ENCODE measurements at regions of chr18 and their contacts with region 1.

Region 1: DNA sequence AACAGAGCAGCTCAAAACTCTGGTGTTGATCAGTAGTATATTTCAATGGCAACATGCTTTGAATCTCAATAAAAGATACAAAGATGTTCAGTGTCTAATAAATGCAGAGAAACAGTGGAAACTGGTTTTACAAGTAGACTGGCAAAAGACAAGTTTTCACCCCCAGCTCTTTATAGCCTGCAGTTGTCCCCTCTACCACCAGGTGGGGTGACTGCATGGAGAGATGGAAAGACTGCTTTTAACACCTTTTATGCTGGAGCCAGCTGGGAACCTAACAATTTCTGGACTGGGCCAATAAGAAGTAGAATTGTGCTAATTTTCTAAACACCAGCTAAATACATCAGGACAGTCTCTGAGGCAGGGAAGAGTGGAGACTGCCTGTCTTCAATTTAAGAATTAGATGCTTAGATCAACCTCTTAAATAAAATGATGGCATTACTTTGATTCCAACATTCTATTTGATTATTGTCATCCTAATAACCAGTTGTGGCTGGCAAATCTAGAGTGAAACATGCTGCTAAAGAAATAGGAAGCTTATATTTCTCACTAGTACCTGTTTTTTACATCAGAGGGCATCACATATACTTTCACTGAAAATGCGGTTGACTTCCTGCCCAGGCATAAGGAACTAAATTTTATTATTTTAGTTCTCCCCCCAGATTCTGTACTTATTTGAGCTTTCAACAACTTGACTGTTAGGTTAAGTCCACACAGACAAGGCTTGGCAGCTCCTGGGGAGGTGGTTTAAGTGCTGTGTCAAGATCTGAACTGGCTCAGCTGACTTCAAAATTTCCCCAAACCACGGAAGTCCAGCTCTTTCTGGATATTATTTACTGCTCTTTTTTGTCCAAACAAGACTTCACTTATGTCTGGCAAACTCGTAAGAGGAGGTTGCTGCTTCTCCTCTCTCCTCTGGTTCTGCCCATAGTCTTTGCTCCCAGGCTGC is 140.5 kb downstream of the TPGS2 start:
- DNase-seq: peak; percentile 28
- H3K4me3 Mint-ChIP-seq: no peak overlapping the region
- H3K27ac Mint-ChIP-seq: no peak overlapping the region
- H3K4me1 Mint-ChIP-seq: no peaks in the 10 kb centered on the region
- H3K27me3 Mint-ChIP-seq: peaks cover 16% of the 10 kb centered on the region

Region 2: DNA sequence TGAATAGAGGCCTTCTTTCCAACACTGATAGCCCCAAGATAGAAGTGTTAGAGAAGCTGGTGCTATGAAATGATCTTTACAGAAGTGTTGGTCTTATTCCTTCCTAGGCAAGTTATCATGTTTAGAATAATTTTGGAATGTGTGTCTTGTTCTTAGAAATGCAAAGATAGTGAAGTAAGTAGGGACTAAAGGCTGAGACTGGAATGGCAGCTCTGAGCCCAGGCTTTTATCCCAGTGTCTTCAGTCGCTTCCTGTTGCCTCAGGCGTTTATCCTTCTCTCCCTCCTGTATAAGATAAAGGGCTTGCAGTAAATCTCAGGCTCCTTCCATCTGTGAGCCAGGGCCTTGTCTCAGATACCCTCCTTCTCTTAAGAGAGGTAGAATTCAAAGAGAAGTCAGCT is 77.6 kb before region 1 on chr18:
- intact Hi-C with region 1: no loop called
- DNase-seq: no peak
- H3K4me3 Mint-ChIP-seq: no peak overlapping the region
- H3K27ac Mint-ChIP-seq: no peak overlapping the region
- H3K4me1 Mint-ChIP-seq: no peaks in the 10 kb centered on the region
- H3K27me3 Mint-ChIP-seq: no peaks in the 10 kb centered on the region

Region 3: DNA sequence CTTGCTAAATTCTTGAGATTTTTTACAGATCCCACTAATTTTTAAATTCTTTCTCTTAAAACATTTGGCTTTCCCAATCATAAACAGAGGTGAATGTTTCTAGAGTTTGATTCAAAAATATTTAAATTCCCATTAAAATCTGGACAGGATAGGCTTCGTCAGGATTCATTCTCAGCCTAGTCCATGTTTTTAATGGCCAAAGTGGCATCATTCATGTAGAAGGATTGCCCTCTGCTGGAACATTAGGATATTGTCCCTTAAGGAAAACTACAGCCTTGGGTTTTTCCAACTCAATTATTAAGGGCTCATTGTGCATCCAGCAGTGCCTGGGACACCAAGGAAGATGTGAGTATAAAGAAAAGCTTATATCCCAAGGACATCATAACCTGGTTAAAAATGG is 68.8 kb after region 1 on chr18:
- intact Hi-C with region 1: loop called (anchors 2 kb)
- DNase-seq: no peak
- H3K4me3 Mint-ChIP-seq: no peak overlapping the region
- H3K27ac Mint-ChIP-seq: no peak overlapping the region
- H3K4me1 Mint-ChIP-seq: no peaks in the 10 kb centered on the region
- H3K27me3 Mint-ChIP-seq: no peaks in the 10 kb centered on the region

Region 4: GRCh38 chr18:36798738-36799473 is 110.6 kb after region 1 on chr18:
- intact Hi-C with region 1: no loop called
- DNase-seq: no peak
- H3K4me3 Mint-ChIP-seq: no peak overlapping the region
- H3K27ac Mint-ChIP-seq: peak overlapping the region; percentile 6
- H3K4me1 Mint-ChIP-seq: no peaks in the 10 kb centered on the region
- H3K27me3 Mint-ChIP-seq: no peaks in the 10 kb centered on the region

Region 5: GRCh38 chr18:36899289-36899688 is 211.0 kb after region 1 on chr18:
- intact Hi-C with region 1: loop called (anchors 2 kb)
- DNase-seq: no peak
- H3K4me3 Mint-ChIP-seq: no peak overlapping the region
- H3K27ac Mint-ChIP-seq: no peak overlapping the region
- H3K4me1 Mint-ChIP-seq: no peaks in the 10 kb centered on the region
- H3K27me3 Mint-ChIP-seq: no peaks in the 10 kb centered on the region

Measured in activated T-helper 1 cell treated with anti-CD3 and anti-CD28 coated beads, Interleukin-12 subunit alpha, Interleukin-12 subunit beta, Interleukin-2, Interleukin-4 antibody, amounts not matched to agents 30 ng/mL and 10 ng/mL and 1 ng/mL, durations not matched to agents 14 hours and 24 hours and 36 hours (primary cell).